ENCODE measurements at regions of chr6 and their contacts with region 1.

Region 1: DNA sequence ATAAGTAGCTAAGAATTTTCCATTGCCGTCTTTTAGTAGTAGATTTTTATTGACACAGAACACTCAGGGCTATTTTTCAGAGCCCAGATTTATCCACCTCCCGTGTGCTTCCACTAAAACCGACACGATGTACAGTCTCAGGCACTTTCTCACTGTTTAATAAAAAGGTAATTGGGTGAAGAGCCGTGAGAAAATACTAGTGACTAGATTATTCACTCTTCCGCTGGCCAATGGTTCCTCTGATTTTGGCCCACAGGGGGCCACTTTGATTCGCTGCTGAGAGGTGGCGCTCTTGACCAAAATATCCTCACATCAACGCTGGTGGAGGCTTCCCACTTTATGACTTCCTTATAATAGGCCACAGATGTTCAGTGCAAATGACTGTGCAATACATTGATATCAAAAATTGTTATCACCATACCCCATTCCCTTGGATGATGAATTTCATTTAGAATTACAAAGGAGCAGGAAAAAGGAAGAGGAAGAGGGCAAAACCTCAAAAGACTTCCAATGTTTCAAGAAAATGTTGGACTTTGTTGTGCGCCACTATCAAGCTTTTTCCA is 12.3 kb upstream of the HDDC2 start:
- DNase-seq: peak; percentile 46 to 56
- ATAC-seq: peak; percentile 92

Region 2: GRCh38 chr6:125764121-125764671 is 450.1 kb after region 1 on chr6:
- intact Hi-C with region 1: loop called (anchors 5 to 10 kb)
- DNase-seq: no peak
- ATAC-seq: no peak

Measured in left colon (tissue), 2 donors.